ENCODE measurements at regions of chr15 and their contacts with region 1.

Region 1: GRCh38 chr15:70799667-70800450 is 36.5 kb upstream of the UACA start:
- DNase-seq: peak; percentile 95
- H3K4me3 ChIP-seq: no peak overlapping the region
- H3K27ac ChIP-seq: peak overlapping the region; percentile 92
- H3K27me3 ChIP-seq: no peaks in the 10 kb centered on the region
- CTCF ChIP-seq: no peak

Region 2: DNA sequence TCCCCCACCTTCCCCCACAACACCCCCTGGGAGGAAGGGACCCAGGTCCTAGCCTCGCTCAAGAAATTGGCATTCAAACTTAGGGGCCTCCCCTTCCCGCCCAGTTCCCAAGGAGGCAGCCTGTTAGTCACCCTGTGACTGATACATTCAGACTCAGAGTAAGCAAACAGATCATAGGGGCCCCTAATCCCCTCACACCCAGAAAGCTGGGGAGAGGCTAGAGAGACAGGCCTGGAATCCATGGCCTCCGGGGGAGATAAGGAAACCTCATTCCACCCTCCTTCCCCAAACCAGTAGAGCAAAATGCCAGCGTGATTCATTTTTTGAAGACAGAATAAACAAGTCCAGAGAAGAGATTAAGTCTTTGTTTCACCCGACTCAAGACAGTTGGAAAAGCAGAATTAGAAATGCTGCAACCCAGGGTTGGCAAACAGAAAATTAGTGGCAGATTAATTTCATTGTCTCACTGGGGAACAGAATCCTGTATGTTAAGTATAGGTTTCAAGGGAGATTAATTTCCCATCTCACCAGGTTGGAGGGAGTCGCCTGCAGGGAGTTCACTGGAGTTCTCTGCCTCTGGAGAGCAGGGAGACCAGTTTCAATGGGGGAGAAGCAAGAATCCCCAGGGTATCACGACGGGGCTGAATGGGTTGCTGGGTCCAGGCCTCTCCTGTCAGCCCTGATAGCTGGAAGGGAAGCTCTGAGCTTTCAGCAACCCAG is 304.8 kb before region 1 on chr15:
- CTCF ChIA-PET with region 1: no interaction called
- POLR2A ChIA-PET with region 1: interaction called, 11 read pairs
- DNase-seq: peak; percentile 82
- H3K4me3 ChIP-seq: no peak overlapping the region
- H3K27ac ChIP-seq: peak overlapping the region; percentile 39
- H3K27me3 ChIP-seq: peaks cover 3% of the 10 kb centered on the region
- CTCF ChIP-seq: no peak

Region 3: GRCh38 chr15:70788114-70789049 is 11.5 kb before region 1 on chr15:
- CTCF ChIA-PET with region 1: no interaction called
- POLR2A ChIA-PET with region 1: interaction called, 23 read pairs
- DNase-seq: no peak
- H3K4me3 ChIP-seq: no peak overlapping the region
- H3K27ac ChIP-seq: peak overlapping the region; percentile 73
- H3K27me3 ChIP-seq: no peaks in the 10 kb centered on the region
- CTCF ChIP-seq: no peak

Region 4: GRCh38 chr15:70818580-70818979 is 18.7 kb after region 1 on chr15:
- CTCF ChIA-PET with region 1: no interaction called
- POLR2A ChIA-PET with region 1: no interaction called
- DNase-seq: no peak
- H3K4me3 ChIP-seq: no peak overlapping the region
- H3K27ac ChIP-seq: no peak overlapping the region
- H3K27me3 ChIP-seq: no peaks in the 10 kb centered on the region
- CTCF ChIP-seq: no peak

Measured in AG04450 (cell line).